ENCODE measurements at regions of chr7 and their contacts with region 1.

Region 1: DNA sequence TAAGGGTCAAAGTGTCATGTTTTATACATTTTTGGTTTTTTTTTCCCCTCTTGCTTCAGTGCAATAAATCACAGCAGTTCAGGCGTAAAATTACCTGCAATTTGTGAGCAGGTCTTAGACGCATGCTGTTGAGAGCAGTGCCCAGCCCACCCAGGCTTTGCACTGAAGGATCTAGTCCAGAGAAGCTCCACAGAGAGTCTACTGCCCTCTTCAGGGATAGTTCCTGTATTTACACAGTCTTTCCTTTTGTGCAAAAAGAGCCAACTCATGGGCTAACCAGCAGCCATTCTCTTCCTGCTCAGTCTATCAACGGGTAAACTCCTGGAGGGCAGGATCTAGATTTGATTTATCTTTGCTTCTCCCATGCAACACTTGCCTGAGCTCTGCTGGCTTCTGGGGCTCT is 82.2 kb upstream of the NAMPT start:
- DNase-seq: peak; percentile 9
- H3K4me3 Mint-ChIP-seq: no peak overlapping the region
- H3K27ac Mint-ChIP-seq: peak overlapping the region; percentile 64
- H3K4me1 Mint-ChIP-seq: peaks cover 45% of the 10 kb centered on the region
- H3K27me3 Mint-ChIP-seq: peaks cover 18% of the 10 kb centered on the region

Region 2: DNA sequence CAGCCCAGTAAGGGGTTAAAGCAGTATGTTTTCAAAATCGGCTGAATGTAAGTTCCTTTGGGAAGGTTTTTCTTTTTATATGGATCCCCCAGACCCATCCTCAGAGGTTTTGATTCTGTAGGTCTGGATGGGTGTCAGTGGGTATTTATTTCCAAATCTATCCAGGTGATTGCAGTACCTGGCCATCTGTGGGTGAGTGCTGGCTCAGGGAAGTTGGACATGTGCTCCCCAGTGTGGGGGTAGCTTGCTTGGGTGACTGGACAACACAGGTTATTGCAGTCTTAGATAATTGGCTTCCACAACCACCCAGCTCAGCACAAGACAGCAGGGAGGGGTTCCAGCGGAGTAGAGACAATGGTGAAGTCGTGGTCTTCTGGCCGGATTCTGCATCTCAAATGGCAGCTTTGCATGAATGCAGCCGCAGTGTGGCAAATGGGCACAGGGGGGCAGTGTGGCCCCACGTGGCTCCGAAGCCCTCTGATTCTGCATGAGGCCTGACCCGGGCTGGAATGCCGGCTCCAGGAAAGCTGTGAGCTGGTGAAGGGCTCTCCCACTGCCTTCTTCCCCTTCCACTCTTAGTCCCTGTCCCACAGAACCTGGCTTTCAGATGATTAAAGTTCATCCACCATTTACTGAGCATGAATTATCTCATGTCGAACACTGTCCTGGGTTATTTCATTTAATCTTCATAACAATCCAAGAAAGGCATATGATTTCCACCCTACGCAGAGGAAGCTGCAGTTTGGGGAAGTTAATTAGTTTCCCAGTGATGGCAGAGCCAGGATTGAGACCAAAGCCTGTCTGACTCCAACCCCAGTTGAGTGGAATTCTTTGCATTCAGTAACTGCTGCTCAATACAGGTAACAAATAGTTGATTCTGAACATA is 190.4 kb before region 1 on chr7:
- CTCF ChIA-PET with region 1: interaction called, 5 read pairs
- POLR2A ChIA-PET with region 1: no interaction called
- intact Hi-C with region 1: loop called (anchors 2 kb)
- DNase-seq: peak; percentile 80
- H3K4me3 Mint-ChIP-seq: no peak overlapping the region
- H3K27ac Mint-ChIP-seq: no peak overlapping the region
- H3K4me1 Mint-ChIP-seq: peaks cover 5% of the 10 kb centered on the region
- H3K27me3 Mint-ChIP-seq: peaks cover 13% of the 10 kb centered on the region

Region 3: GRCh38 chr7:106260136-106260561 is 106.9 kb before region 1 on chr7:
- CTCF ChIA-PET with region 1: no interaction called
- POLR2A ChIA-PET with region 1: no interaction called
- intact Hi-C with region 1: loop called (anchors 1 kb)
- DNase-seq: no peak
- H3K4me3 Mint-ChIP-seq: no peak overlapping the region
- H3K27ac Mint-ChIP-seq: peak overlapping the region; percentile 78
- H3K4me1 Mint-ChIP-seq: peaks cover 75% of the 10 kb centered on the region
- H3K27me3 Mint-ChIP-seq: no peaks in the 10 kb centered on the region

Region 4: DNA sequence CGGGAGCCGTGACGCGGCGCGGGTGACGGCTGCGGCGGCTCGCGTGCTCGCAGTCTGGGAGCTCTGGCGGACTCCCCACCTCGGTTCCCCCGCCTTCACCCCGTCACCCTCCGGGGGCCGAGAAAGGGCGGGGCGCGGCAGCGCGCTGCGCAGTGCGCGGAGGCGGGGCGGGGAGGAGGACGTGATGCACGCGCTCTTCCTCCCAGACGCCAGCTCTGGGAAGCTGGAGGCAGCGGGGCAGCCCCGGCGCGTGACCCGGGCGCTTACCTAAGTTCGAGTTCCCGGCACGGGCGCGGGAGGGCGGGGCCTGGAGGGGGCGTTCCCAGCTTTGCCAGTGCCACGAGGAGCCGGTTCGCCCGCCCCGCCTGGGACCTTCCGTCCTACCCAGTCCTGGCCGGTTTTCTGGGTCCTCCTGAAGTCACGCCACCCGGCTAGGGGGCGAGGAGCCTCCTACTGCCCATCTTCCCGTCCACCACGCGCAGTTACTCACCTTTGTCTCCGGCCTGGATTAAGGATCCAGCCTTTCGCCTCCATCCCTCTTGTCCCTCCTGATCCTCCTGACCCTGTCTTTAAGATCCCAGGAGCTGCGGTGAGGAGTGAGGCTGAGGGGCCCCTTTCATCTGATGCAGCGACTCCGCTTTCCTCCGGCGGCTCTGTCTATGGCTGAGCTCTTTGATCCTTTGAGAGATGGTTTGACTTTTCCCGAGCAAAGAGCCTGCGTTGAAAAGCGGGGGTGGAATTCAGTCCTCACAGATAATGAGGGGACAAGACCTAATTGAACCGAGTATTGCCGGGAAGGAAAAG is 81.8 kb before region 1 on chr7:
- CTCF ChIA-PET with region 1: interaction called, 5 read pairs
- POLR2A ChIA-PET with region 1: interaction called, 11 read pairs
- intact Hi-C with region 1: loop called (anchors 1 kb)
- DNase-seq: peak; percentile 100
- H3K4me3 Mint-ChIP-seq: peak overlapping the region; percentile 92
- H3K27ac Mint-ChIP-seq: peak overlapping the region; percentile 99
- H3K4me1 Mint-ChIP-seq: peaks cover 50% of the 10 kb centered on the region
- H3K27me3 Mint-ChIP-seq: peaks cover 2% of the 10 kb centered on the region

Region 5: GRCh38 chr7:106384371-106384770 is 17.4 kb after region 1 on chr7:
- CTCF ChIA-PET with region 1: no interaction called
- POLR2A ChIA-PET with region 1: no interaction called
- intact Hi-C with region 1: loop called (anchors 2 kb)
- DNase-seq: no peak
- H3K4me3 Mint-ChIP-seq: no peak overlapping the region
- H3K27ac Mint-ChIP-seq: no peak overlapping the region
- H3K4me1 Mint-ChIP-seq: peaks cover 4% of the 10 kb centered on the region
- H3K27me3 Mint-ChIP-seq: peaks cover 2% of the 10 kb centered on the region

Region 6: DNA sequence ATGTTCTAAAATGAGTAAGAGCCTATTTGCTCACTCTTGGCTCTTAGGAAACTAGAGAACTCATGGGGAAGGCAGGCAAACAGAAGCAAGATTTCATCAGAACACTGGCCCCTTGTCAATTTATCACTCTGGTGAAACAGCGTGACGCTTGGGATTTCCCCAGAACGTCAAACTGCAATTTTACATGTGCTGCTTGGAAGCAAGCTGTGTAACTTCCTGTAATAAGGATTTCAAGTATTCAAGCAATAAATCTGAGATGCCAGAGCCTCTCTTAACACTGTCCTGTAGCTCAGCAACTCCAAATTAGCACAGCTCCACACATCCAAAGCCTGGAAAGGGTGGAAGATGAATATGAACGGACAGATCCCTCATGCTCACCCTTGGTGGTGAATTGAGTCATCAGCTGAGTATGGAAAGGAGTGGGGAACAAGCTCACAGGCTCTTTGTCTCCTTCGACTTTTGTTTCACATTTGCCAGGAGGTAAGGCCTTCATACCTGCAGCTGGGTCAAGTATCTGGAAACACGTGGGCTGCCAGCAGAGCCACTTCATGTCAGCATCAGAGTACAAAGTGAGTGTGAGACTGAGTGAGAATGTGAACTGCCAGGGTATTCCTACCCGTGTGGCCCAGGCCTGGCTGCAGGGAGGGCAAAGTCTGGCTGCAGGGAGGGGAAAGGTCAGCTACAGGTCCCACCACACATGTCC is 58.1 kb after region 1 on chr7:
- CTCF ChIA-PET with region 1: interaction called, 3 read pairs
- POLR2A ChIA-PET with region 1: interaction called, 4 read pairs
- intact Hi-C with region 1: loop called (anchors 1 kb)
- DNase-seq: peak; percentile 91
- H3K4me3 Mint-ChIP-seq: peak overlapping the region; percentile 65
- H3K27ac Mint-ChIP-seq: peak overlapping the region; percentile 97
- H3K4me1 Mint-ChIP-seq: peaks cover 81% of the 10 kb centered on the region
- H3K27me3 Mint-ChIP-seq: no peaks in the 10 kb centered on the region

Region 7: DNA sequence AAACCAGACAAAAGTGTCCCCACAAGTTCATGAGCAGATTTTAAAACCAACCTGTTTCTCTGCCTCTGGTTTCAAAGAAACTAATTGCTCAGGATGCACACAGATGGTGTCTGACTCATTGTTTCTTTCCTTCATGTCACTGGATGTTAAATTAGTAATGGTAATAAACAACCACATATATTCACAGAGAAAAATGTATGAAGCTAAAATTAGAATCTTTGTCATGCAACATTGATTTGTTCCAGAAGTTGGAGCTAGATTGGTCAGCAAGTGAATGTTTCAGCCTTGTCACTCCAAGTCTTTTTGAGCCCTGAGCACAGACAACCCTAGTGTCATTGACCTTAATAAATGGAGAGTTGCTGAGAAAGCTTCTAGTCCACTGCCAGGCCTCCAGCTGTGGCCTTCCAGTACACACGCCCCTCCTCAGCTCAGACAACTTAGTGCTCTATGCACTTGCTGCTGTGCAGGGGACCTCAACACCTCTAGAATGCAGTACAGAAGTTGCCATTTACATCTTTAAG is 118.1 kb after region 1 on chr7:
- CTCF ChIA-PET with region 1: no interaction called
- POLR2A ChIA-PET with region 1: no interaction called
- intact Hi-C with region 1: loop called (anchors 2 kb)
- DNase-seq: peak; percentile 22
- H3K4me3 Mint-ChIP-seq: no peak overlapping the region
- H3K27ac Mint-ChIP-seq: peak overlapping the region; percentile 78
- H3K4me1 Mint-ChIP-seq: peaks cover 58% of the 10 kb centered on the region
- H3K27me3 Mint-ChIP-seq: peaks cover 18% of the 10 kb centered on the region